ENCODE measurements at regions of chr11 and their contacts with region 1.

Region 1: GRCh38 chr11:84261707-84262106 is 975.5 kb upstream of the CCDC90B start:
- DNase-seq: peak in 10 of 42 donors; percentile 13 to 70 (median 34)

Region 2: GRCh38 chr11:83836883-83837654 is 424.6 kb before region 1 on chr11:
- intact Hi-C with region 1: loop called (anchors 5 kb)
- DNase-seq: peak; percentile 27 to 87 (median 68)

Region 3: DNA sequence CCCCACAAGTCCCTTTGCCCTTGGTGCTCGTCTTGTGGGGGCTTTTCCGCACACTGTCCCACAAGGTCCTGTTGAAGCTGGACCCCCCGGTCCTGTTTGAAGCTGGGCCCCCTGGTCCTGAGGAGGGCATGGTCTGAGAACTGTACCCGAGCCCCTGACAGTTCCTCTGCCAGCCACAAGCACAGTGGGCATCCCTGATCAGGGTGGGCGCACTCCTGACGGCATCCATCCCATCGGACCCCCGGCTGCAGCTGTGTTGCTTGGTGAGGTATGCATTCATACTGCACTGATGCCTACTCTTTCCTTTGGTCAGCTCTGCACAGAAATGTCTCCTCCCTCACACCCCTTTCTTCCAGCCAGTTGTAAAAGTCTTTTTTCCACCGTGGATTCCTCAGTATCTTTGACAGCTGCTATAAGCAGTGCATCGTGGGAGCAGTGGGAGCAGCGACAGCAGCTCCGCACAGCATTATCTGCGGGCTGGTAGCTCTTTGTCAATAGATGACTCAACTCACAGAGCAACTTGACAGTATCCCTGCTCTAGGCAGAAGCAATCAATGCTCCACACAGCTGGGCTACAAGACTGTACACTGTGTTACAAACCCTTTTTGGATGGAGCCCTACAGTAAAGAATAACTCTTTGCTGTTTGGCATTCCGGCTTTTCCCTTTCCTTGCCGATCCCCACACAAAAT is 55.3 kb after region 1 on chr11:
- intact Hi-C with region 1: loop called (anchors 5 kb)
- DNase-seq: peak; percentile 52 to 95 (median 82)

Measured in head of caudate nucleus (tissue), 42 donors.